ENCODE measurements at regions of chr20 and their contacts with region 1.

Region 1: GRCh38 chr20:39909447-39909846 is 779.6 kb downstream of the MAFB start:
- DNase-seq: peak in 1 of 2 donors; percentile 37
- ATAC-seq: peak in 7 of 8 donors; percentile 51 to 79 (median 62)
- H3K4me3 ChIP-seq: no peak overlapping the region
- H3K27ac ChIP-seq: no peak overlapping the region
- H3K4me1 ChIP-seq: peaks cover 0 to 10% (median 0%) of the 10 kb centered on the region in 9 donors
- H3K27me3 ChIP-seq: peaks cover 0 to 4% (median 0%) of the 10 kb centered on the region in 7 donors
- CTCF ChIP-seq: no peak

Region 2: DNA sequence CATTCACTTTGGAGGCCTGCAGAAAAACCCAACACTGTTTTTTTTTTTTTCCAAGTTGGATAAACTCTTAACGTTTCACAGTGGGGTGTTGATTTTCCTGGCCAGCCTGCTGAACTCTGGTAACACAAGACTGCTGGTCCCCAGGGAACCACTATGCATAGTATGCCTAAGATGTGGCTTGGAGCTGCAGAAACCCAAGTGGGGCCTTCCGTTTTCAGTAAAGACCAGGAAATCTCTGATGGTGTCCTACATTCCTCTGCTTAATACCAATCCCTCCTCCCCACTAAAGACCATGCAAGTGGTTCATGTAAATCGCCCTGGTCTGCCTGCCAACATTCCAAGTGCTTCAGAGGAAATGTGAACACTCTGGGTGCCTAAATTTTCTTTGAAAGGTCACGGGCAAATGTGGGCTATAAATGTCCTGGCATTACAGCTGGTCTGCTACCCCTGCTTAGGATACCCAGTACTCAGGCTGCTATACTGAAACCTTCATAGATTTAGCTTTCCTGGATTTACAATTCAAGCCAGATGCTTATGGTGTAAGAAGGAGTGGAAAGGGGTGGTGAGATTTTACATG is 164.2 kb after region 1 on chr20:
- intact Hi-C with region 1: loop called in 1 of 10 experiments (anchors 10 kb)
- DNase-seq: no peak
- ATAC-seq: peak in 2 of 8 donors; percentile 29 to 52
- H3K4me3 ChIP-seq: no peak overlapping the region
- H3K27ac ChIP-seq: no peak overlapping the region
- H3K4me1 ChIP-seq: peaks cover 0 to 7% (median 0%) of the 10 kb centered on the region in 9 donors
- H3K27me3 ChIP-seq: no peaks in the 10 kb centered on the region
- CTCF ChIP-seq: no peak

Measured in heart right ventricle (tissue), 16 donors.